Activated naive CD4-positive, alpha-beta T cell treated with anti-CD3 and anti-CD28 coated beads for 36 hours (primary cell): ENCODE measurements at regions of chr6 and their contacts with region 1.

Region 1: GRCh38 chr6:145963216-145964068 is 716 bp downstream of the SHPRH start:
- DNase-seq: peak; percentile 58
- H3K4me3 Mint-ChIP-seq: peak overlapping the region; percentile 94
- H3K27ac Mint-ChIP-seq: peak overlapping the region; percentile 70
- H3K4me1 Mint-ChIP-seq: peaks cover 48% of the 10 kb centered on the region
- H3K27me3 Mint-ChIP-seq: no peaks in the 10 kb centered on the region

Region 2: GRCh38 chr6:144349690-144350527 is 1613.5 kb before region 1 on chr6:
- CTCF ChIA-PET with region 1: no interaction called
- intact Hi-C with region 1: loop called (anchors 10 kb)
- DNase-seq: no peak
- H3K4me3 Mint-ChIP-seq: peak overlapping the region; percentile 65
- H3K27ac Mint-ChIP-seq: peak overlapping the region; percentile 85
- H3K4me1 Mint-ChIP-seq: peaks cover 88% of the 10 kb centered on the region
- H3K27me3 Mint-ChIP-seq: no peaks in the 10 kb centered on the region

Region 3: DNA sequence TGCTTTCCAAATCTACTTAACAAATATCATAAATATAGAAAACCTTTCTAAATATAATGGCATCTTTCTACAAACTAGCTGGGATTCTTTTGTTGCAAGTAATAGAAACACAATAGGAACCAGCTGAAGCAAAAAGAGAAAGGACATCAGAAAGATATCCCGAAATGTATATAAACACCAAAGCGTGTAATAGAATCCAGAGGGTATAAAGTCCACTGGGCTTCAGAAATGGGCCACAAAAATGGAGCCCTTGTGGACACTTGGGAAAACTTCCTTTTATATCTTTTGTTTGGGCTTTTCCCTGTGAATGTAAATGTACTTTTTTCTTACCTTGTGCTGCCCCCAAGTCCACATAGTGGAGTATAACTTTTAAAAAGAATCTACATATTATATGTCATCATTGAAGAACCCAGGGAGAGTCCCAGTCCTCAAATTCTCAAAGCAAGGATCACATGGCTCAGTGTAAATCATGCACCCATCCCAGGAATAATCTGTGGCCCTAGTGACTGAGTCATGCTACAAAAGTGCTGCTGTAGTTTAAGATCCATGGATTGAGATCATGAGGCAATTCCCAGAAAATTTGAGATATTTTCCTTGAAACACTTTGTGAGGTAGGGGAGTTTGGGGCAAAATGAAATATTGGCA is 685.2 kb before region 1 on chr6:
- CTCF ChIA-PET with region 1: no interaction called
- intact Hi-C with region 1: no loop called
- DNase-seq: no peak
- H3K4me3 Mint-ChIP-seq: no peak overlapping the region
- H3K27ac Mint-ChIP-seq: no peak overlapping the region
- H3K4me1 Mint-ChIP-seq: no peaks in the 10 kb centered on the region
- H3K27me3 Mint-ChIP-seq: peaks cover 2% of the 10 kb centered on the region

Region 4: DNA sequence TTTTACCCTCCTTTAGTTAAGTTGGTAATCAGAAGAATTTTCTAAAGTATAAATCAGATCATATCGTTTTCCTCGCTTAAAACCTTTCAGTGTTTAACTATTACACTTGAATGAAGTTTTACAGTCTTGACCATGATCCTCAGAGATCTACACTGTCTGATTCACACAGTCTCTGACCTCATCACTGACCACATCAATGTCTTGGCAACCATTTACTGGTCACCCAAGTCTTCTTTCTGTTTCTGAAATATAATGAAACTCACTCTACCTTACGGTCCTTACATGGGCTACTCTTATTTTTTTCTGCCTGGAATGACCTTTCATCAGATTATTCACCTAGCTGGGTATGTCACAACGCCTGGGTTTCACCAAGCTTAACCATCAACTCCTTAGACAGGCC is 706.7 kb after region 1 on chr6:
- CTCF ChIA-PET with region 1: no interaction called
- intact Hi-C with region 1: no loop called
- DNase-seq: no peak
- H3K4me3 Mint-ChIP-seq: no peak overlapping the region
- H3K27ac Mint-ChIP-seq: no peak overlapping the region
- H3K4me1 Mint-ChIP-seq: no peaks in the 10 kb centered on the region
- H3K27me3 Mint-ChIP-seq: peaks cover 14% of the 10 kb centered on the region

Region 5: GRCh38 chr6:146770965-146771735 is 807.7 kb after region 1 on chr6:
- CTCF ChIA-PET with region 1: no interaction called
- intact Hi-C with region 1: loop called (anchors 10 kb)
- DNase-seq: peak; percentile 79
- H3K4me3 Mint-ChIP-seq: peak overlapping the region; percentile 62
- H3K27ac Mint-ChIP-seq: no peak overlapping the region
- H3K4me1 Mint-ChIP-seq: peaks cover 22% of the 10 kb centered on the region
- H3K27me3 Mint-ChIP-seq: no peaks in the 10 kb centered on the region

Region 6: DNA sequence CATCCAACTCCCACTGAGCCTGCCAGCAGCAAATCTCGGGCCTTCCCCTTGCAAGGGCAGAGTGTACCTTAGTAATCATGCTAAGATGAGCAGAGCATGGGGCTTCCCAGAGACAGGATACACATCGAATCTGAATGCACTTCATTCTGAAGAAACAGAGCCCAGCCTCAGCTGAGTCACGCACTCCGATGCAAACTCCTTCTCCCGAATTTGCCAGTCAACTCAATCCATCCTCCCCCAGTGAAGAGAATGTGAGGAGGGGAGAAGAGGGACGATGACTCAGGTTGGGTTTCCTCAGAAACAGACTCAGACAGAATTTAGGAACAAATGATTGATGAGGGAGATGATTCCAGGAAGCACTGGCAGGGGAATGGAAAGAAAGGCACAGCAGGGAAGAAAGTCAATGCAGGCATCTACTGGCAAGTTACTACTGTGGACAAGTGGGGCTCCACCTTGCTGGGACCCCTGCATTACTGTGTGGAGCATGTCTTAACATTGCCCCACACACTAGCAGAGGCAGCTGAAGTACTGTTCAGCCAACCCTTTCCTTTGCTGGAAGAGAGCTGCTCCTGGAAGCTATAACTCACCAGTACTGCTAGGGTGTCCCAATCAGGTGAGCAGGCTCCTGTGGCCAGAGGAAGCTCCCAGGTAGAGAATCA is 886.9 kb after region 1 on chr6:
- CTCF ChIA-PET with region 1: no interaction called
- intact Hi-C with region 1: loop called (anchors 5 kb)
- DNase-seq: peak; percentile 72
- H3K4me3 Mint-ChIP-seq: no peak overlapping the region
- H3K27ac Mint-ChIP-seq: peak overlapping the region; percentile 71
- H3K4me1 Mint-ChIP-seq: peaks cover 31% of the 10 kb centered on the region
- H3K27me3 Mint-ChIP-seq: peaks cover 7% of the 10 kb centered on the region